PC-3 (cell line): ENCODE measurements at regions of chr10 and their contacts with region 1.

Region 1: GRCh38 chr10:69527961-69528360 is 45.3 kb downstream of the NEUROG3 start:
- DNase-seq: no peak
- ATAC-seq: no peak
- H3K4me3 ChIP-seq: no peak overlapping the region
- H3K27ac ChIP-seq: no peak overlapping the region
- H3K4me1 ChIP-seq: no peaks in the 10 kb centered on the region
- H3K27me3 ChIP-seq: no peaks in the 10 kb centered on the region
- CTCF ChIP-seq: no peak

Region 2: GRCh38 chr10:69439813-69440506 is 88.0 kb before region 1 on chr10:
- CTCF ChIA-PET with region 1: no interaction called
- POLR2A ChIA-PET with region 1: no interaction called
- intact Hi-C with region 1: no loop called
- DNase-seq: peak; percentile 96
- ATAC-seq: peak; percentile 45
- H3K4me3 ChIP-seq: peak overlapping the region; percentile 31; the same call in 1 of the 2 replicates
- H3K27ac ChIP-seq: peak overlapping the region; percentile 91
- H3K4me1 ChIP-seq: peaks cover 53% of the 10 kb centered on the region
- H3K27me3 ChIP-seq: no peaks in the 10 kb centered on the region
- CTCF ChIP-seq: no peak

Region 3: DNA sequence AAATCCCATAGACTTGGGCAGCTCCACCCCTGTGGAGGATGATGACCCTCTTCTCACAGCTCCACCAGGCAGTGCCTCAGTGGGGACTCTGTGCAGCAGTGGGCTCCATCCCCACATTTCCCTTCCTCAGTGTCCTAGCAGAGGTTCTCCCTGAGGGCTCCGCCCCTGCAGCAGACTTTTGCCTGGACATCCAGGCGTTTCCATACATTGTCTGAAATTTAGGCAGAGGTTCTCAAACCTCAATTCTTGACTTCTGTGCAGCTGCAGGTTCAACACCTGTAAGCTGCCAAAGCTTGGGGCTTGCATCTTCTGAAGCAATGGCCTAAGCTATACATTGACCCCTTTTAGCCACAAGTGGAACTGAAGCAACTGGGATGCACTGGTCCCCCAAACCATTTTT is 13.5 kb after region 1 on chr10:
- CTCF ChIA-PET with region 1: no interaction called
- POLR2A ChIA-PET with region 1: interaction called, 12 read pairs
- intact Hi-C with region 1: no loop called
- DNase-seq: no peak
- ATAC-seq: no peak
- H3K4me3 ChIP-seq: no peak overlapping the region
- H3K27ac ChIP-seq: no peak overlapping the region
- H3K4me1 ChIP-seq: no peaks in the 10 kb centered on the region
- H3K27me3 ChIP-seq: no peaks in the 10 kb centered on the region
- CTCF ChIP-seq: no peak